ENCODE measurements at regions of chr6 and their contacts with region 1.

Region 1: DNA sequence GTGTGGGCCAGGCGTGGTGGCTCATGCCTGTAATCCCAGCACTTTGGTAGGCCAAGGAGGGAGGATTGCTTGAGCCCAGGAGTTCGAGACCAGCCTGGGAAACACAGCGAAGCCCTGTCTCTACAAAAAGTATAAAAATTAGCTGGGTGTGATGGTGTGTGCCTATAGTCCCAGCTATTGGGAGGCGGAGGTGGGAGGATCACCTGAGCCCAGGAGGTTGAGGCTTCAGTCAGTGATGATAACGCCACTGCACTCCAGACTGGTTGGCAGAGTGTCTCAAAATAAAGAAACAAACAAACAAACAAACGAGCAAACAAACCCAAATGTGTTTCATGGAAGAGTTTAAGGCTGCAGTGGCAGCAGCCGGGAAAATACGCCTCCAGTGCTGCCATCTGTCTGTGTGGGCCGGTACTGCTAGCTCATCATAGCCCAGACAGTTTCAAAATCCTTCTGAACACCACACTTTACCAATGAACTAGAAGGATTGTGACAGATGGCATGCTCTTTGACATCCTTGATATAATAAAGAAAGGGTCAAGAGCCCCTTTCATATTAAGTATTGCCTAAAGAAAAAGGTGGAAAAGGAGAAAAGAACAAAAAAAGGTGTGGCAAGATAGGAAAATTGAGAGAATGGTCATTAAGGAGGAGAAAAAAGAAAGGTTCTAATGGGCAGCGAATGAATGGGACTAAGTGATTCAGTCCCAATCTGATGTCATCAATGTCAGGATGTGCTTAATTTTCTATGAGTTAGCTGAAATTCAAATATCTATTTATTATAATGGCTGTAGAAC is 298.6 kb downstream of the SYNE1 start:
- DNase-seq: peak; percentile 25 to 78 (median 63)
- ATAC-seq: peak; percentile 90
- H3K4me3 ChIP-seq: no peak overlapping the region
- H3K4me3 Mint-ChIP-seq: no peak overlapping the region
- H3K27ac ChIP-seq: no peak overlapping the region
- H3K27ac Mint-ChIP-seq: no peak overlapping the region
- H3K4me1 ChIP-seq: no peaks in the 10 kb centered on the region
- H3K4me1 Mint-ChIP-seq: no peaks in the 10 kb centered on the region
- H3K27me3 ChIP-seq: no peaks in the 10 kb centered on the region
- H3K27me3 Mint-ChIP-seq: no peaks in the 10 kb centered on the region
- CTCF ChIP-seq: peak; percentile 93

Region 2: DNA sequence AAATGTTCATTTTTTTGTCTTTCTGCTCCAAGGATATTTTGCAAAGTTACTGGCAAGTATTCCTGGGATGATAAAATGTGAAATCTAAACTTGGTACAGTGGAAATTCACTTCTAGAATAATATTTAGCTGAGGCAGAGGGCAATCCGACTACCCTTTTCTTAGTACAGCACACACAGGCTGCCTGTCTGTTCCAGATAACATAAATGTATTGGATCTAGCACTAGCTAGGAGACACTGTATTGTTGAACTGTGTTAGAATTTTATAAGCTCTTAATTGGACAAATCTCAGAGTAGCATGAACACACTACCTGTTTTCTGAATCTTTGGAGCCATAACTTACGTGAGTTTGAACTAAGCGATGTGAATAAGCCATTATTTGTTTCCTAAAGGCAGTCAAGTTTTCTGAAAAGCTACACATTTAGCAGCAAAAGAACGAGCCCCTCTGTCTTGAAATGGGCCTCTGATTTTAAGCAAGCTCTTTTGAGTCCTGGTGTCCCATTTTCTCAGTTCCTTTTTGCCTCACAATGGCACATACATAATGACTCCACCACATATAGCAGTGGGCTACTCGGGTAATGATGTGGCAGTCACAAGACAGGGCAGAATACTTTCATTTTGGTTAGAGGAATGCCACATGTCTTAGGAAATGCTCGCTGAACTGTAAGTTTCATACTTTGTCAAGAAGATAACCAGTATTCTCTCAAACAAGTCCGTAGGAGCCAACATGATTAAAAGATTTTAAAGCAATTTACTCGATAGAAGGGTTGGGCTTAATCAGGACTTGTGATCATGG is 647.6 kb before region 1 on chr6:
- CTCF ChIA-PET with region 1: interaction called, 4 read pairs
- POLR2A ChIA-PET with region 1: no interaction called
- intact Hi-C with region 1: loop called in 1 of 2 experiments (anchors 2 kb)
- DNase-seq: peak in 2 of 9 experiments; percentile 37 to 64
- ATAC-seq: peak; percentile 74
- H3K4me3 ChIP-seq: peak overlapping the region; percentile 0 to 41
- H3K4me3 Mint-ChIP-seq: peak overlapping the region; percentile 74
- H3K27ac ChIP-seq: peak overlapping the region in 1 of 2 experiments; percentile 38
- H3K27ac Mint-ChIP-seq: peak overlapping the region; percentile 88
- H3K4me1 ChIP-seq: no peaks in the 10 kb centered on the region
- H3K4me1 Mint-ChIP-seq: peaks cover 26% of the 10 kb centered on the region
- H3K27me3 ChIP-seq: no peaks in the 10 kb centered on the region
- H3K27me3 Mint-ChIP-seq: no peaks in the 10 kb centered on the region
- CTCF ChIP-seq: no peak

Region 3: GRCh38 chr6:151999194-151999593 is 339.3 kb before region 1 on chr6:
- CTCF ChIA-PET with region 1: no interaction called
- POLR2A ChIA-PET with region 1: no interaction called
- intact Hi-C with region 1: no loop called
- DNase-seq: no peak
- ATAC-seq: no peak
- H3K4me3 ChIP-seq: no peak overlapping the region
- H3K4me3 Mint-ChIP-seq: no peak overlapping the region
- H3K27ac ChIP-seq: no peak overlapping the region
- H3K27ac Mint-ChIP-seq: no peak overlapping the region
- H3K4me1 ChIP-seq: no peaks in the 10 kb centered on the region
- H3K4me1 Mint-ChIP-seq: no peaks in the 10 kb centered on the region
- H3K27me3 ChIP-seq: no peaks in the 10 kb centered on the region
- H3K27me3 Mint-ChIP-seq: no peaks in the 10 kb centered on the region
- CTCF ChIP-seq: no peak

Region 4: DNA sequence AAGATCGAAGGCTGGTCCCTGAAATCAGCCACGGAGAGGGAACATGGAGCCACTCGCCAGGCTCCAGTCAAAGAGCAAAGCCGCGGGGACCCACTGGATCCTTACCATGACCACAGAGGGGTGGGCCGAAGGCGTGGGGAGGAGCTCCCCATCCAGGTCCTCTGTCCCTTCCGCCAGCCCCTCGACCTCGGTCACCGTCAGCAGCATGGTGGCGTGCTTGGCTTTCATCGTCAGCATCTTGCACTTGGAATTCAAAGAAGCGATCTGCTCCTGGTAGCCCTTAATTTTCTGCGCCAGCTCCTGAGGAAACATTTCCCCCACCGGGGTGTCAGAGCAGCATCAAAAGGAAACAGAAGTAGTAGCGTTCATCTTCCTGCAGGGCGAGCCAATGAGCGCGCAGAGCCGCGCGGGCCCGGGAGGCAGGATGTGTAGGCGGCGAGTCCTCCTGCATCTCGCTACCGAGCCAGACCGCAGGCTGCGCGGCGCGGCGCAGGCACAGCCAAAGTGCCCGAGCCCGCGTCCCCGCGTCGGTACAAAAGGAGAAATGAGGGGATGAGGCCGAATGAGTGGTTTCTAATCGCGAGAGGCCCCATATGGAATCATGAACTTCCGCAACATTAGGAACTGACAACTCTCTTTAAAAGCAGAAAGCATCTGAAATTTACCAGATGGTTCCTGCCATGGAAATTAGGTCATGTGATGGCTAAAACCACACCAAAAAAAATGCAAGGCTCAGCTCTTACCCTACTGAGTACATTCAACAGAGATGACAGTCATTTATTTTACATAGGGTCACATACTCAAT is 36.6 kb before region 1 on chr6:
- CTCF ChIA-PET with region 1: interaction called, 53 read pairs
- POLR2A ChIA-PET with region 1: interaction called, 8 read pairs
- intact Hi-C with region 1: loop called (anchors 1 kb)
- DNase-seq: peak; percentile 71 to 94 (median 87)
- ATAC-seq: peak; percentile 97
- H3K4me3 ChIP-seq: peak overlapping the region; percentile 83 to 88
- H3K4me3 Mint-ChIP-seq: peak overlapping the region; percentile 100
- H3K27ac ChIP-seq: peak overlapping the region; percentile 82 to 85
- H3K27ac Mint-ChIP-seq: peak overlapping the region; percentile 100
- H3K4me1 ChIP-seq: peaks cover 21% of the 10 kb centered on the region
- H3K4me1 Mint-ChIP-seq: peaks cover 41% of the 10 kb centered on the region
- H3K27me3 ChIP-seq: no peaks in the 10 kb centered on the region
- H3K27me3 Mint-ChIP-seq: no peaks in the 10 kb centered on the region
- CTCF ChIP-seq: peak; percentile 77

Region 5: DNA sequence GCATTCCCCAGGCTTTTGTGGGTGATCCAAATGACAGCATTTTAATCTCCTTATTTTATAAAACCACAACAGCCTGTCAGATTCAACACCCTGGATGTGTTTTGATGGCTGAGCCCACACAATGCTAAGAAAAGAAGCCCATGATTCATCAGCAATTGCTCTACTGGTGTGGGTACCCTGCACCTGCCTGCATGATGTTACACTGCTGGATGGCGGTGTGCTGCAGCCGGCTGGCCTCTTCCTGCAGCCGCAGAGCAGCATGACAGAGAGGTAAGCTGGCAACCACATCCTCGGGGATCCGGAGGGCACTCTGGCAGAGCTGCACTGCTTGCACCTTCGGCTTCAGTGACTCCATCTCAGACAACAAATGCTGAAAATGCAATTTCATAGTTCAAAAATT is 28.9 kb before region 1 on chr6:
- CTCF ChIA-PET with region 1: interaction called, 26 read pairs
- POLR2A ChIA-PET with region 1: no interaction called
- intact Hi-C with region 1: loop called in 1 of 2 experiments (anchors 1 kb)
- DNase-seq: peak; percentile 40 to 88 (median 73)
- ATAC-seq: peak; percentile 98
- H3K4me3 ChIP-seq: no peak overlapping the region
- H3K4me3 Mint-ChIP-seq: no peak overlapping the region
- H3K27ac ChIP-seq: no peak overlapping the region
- H3K27ac Mint-ChIP-seq: peak overlapping the region; percentile 39
- H3K4me1 ChIP-seq: peaks cover 30% of the 10 kb centered on the region
- H3K4me1 Mint-ChIP-seq: peaks cover 28% of the 10 kb centered on the region
- H3K27me3 ChIP-seq: no peaks in the 10 kb centered on the region
- H3K27me3 Mint-ChIP-seq: no peaks in the 10 kb centered on the region
- CTCF ChIP-seq: no peak

Region 6: GRCh38 chr6:152316024-152316423 is 22.5 kb before region 1 on chr6:
- CTCF ChIA-PET with region 1: interaction called, 26 read pairs
- POLR2A ChIA-PET with region 1: no interaction called
- intact Hi-C with region 1: no loop called
- DNase-seq: no peak
- ATAC-seq: no peak
- H3K4me3 ChIP-seq: no peak overlapping the region
- H3K4me3 Mint-ChIP-seq: no peak overlapping the region
- H3K27ac ChIP-seq: no peak overlapping the region
- H3K27ac Mint-ChIP-seq: no peak overlapping the region
- H3K4me1 ChIP-seq: peaks cover under 1% of the 10 kb centered on the region
- H3K4me1 Mint-ChIP-seq: peaks cover 3% of the 10 kb centered on the region
- H3K27me3 ChIP-seq: no peaks in the 10 kb centered on the region
- H3K27me3 Mint-ChIP-seq: no peaks in the 10 kb centered on the region
- CTCF ChIP-seq: no peak

Region 7: GRCh38 chr6:153947808-153948447 is 1609.4 kb after region 1 on chr6:
- CTCF ChIA-PET with region 1: no interaction called
- POLR2A ChIA-PET with region 1: no interaction called
- intact Hi-C with region 1: no loop called
- DNase-seq: peak in 1 of 9 experiments; percentile 8
- ATAC-seq: no peak
- H3K4me3 ChIP-seq: no peak overlapping the region
- H3K4me3 Mint-ChIP-seq: no peak overlapping the region
- H3K27ac ChIP-seq: no peak overlapping the region
- H3K27ac Mint-ChIP-seq: no peak overlapping the region
- H3K4me1 ChIP-seq: no peaks in the 10 kb centered on the region
- H3K4me1 Mint-ChIP-seq: no peaks in the 10 kb centered on the region
- H3K27me3 ChIP-seq: no peaks in the 10 kb centered on the region
- H3K27me3 Mint-ChIP-seq: peaks cover 5% of the 10 kb centered on the region
- CTCF ChIP-seq: peak; percentile 53

Measured in CD8-positive, alpha-beta T cell (primary cell).